ENCODE measurements at regions of chr6 and their contacts with region 1.

Region 1: DNA sequence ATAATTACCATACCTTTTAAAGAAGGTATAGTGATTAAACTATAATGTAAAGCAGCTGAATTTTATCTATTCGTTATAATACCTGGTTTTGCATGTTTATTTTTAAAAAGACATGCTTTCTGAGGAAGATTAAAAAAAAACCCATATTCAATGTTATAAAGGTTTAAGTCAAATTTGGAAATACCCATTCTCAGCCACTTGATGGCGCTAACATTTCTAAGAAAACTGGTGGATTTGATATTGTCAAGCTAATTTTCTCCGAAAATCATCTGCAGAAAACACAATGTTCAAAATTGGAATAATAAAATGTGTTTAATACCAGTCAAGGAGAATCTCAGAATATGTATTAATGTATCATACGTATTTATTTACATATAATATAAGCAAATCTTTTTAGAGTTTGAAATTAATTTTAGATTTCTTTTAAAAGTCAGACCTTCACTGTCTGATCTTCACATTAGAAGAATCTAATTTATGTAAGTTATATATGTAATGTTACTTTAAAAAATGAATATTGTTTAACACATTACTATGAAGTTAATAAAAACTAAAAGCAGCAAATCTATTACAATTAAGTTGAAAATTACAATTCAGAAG is 35.0 kb downstream of the SHPRH start:
- DNase-seq: peak in 4 of 14 experiments; percentile 9 to 56 (median 41)
- ATAC-seq: no peak
- H3K4me3 ChIP-seq: no peak overlapping the region
- H3K4me3 Mint-ChIP-seq: no peak overlapping the region
- H3K27ac ChIP-seq: no peak overlapping the region
- H3K27ac Mint-ChIP-seq: no peak overlapping the region
- H3K4me1 ChIP-seq: no peaks in the 10 kb centered on the region
- H3K4me1 Mint-ChIP-seq: no peaks in the 10 kb centered on the region
- H3K27me3 ChIP-seq: no peaks in the 10 kb centered on the region
- H3K27me3 Mint-ChIP-seq: no peaks in the 10 kb centered on the region
- CTCF ChIP-seq: peak; percentile 62

Region 2: DNA sequence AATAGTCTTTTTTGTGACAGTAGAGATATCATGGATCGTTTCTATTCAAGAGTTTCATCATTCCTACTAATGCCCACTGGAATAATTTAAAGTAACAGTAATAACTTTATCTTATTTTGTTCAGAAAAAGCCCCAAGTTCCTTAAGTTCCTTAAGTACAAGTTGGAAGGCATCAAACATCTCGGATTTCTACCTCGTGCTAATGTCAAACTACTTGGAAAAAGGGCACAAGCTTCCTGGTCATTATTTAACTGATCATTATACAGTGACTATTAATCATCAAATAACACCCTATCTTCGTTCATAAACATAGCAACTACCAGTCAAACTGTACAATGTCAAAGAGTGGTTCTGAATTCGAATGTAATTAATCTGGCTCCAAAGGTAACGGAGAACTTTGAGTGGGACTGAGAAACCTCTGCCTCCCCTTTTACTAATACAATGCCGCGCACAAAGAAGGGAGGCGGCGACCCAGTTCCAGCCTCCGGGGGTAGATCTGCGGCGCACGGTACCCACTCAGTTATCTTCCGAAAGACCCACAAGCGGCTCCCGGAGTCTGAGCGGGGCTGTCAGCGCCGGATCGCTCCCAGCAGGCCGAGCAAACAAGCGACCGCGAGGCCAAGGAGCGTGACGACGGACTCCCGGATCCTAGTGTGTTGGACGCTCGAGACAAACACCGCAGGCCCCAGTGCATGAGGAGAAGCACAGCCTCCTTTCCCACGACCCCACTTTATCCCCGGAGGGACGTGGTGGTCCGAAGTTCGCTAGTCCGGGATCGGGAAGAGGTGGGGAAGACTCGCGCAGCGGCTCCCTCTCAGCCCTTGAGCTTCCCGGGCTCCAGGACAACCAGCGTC is 34.3 kb after region 1 on chr6:
- CTCF ChIA-PET with region 1: interaction called, 14 read pairs
- POLR2A ChIA-PET with region 1: no interaction called
- intact Hi-C with region 1: no loop called
- DNase-seq: peak; percentile 5 to 64 (median 26)
- ATAC-seq: peak; percentile 15
- H3K4me3 ChIP-seq: peak overlapping the region; percentile 76
- H3K4me3 Mint-ChIP-seq: peak overlapping the region; percentile 96
- H3K27ac ChIP-seq: no peak overlapping the region
- H3K27ac Mint-ChIP-seq: peak overlapping the region; percentile 98
- H3K4me1 ChIP-seq: peaks cover 7% of the 10 kb centered on the region
- H3K4me1 Mint-ChIP-seq: peaks cover 58% of the 10 kb centered on the region
- H3K27me3 ChIP-seq: no peaks in the 10 kb centered on the region
- H3K27me3 Mint-ChIP-seq: no peaks in the 10 kb centered on the region
- CTCF ChIP-seq: no peak

Region 3: DNA sequence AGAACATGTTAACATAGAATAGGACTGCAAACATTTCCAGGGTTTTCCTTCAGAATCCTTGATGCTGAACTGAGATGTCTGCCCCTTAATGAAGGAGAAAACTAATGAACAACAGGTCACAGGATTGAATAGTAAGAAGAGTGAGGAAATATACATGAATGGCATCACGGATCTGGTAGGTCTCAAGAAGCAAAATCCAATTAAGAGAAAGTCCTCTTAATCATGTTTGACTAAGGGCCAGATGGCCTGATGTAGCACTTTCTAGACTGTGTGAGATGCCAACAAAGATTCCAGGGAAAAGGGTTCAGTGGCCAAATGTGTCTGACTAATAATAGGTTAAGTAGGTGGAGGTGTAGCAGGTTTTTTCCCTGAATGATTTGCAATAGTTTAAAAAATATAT is 48.7 kb after region 1 on chr6:
- CTCF ChIA-PET with region 1: no interaction called
- POLR2A ChIA-PET with region 1: no interaction called
- intact Hi-C with region 1: no loop called
- DNase-seq: no peak
- ATAC-seq: no peak
- H3K4me3 ChIP-seq: no peak overlapping the region
- H3K4me3 Mint-ChIP-seq: no peak overlapping the region
- H3K27ac ChIP-seq: no peak overlapping the region
- H3K27ac Mint-ChIP-seq: no peak overlapping the region
- H3K4me1 ChIP-seq: no peaks in the 10 kb centered on the region
- H3K4me1 Mint-ChIP-seq: no peaks in the 10 kb centered on the region
- H3K27me3 ChIP-seq: no peaks in the 10 kb centered on the region
- H3K27me3 Mint-ChIP-seq: peaks cover 14% of the 10 kb centered on the region
- CTCF ChIP-seq: no peak

Region 4: GRCh38 chr6:146224988-146225387 is 295.9 kb after region 1 on chr6:
- CTCF ChIA-PET with region 1: no interaction called
- POLR2A ChIA-PET with region 1: no interaction called
- intact Hi-C with region 1: no loop called
- DNase-seq: no peak
- ATAC-seq: no peak
- H3K4me3 ChIP-seq: no peak overlapping the region
- H3K4me3 Mint-ChIP-seq: no peak overlapping the region
- H3K27ac ChIP-seq: no peak overlapping the region
- H3K27ac Mint-ChIP-seq: no peak overlapping the region
- H3K4me1 ChIP-seq: no peaks in the 10 kb centered on the region
- H3K4me1 Mint-ChIP-seq: no peaks in the 10 kb centered on the region
- H3K27me3 ChIP-seq: no peaks in the 10 kb centered on the region
- H3K27me3 Mint-ChIP-seq: peaks cover 10% of the 10 kb centered on the region
- CTCF ChIP-seq: no peak

Region 5: GRCh38 chr6:146700078-146700686 is 771.0 kb after region 1 on chr6:
- CTCF ChIA-PET with region 1: interaction called, 3 read pairs
- POLR2A ChIA-PET with region 1: no interaction called
- intact Hi-C with region 1: loop called (anchors 5 kb)
- DNase-seq: peak in 10 of 14 experiments; percentile 2 to 71 (median 26)
- ATAC-seq: peak; percentile 57
- H3K4me3 ChIP-seq: no peak overlapping the region
- H3K4me3 Mint-ChIP-seq: no peak overlapping the region
- H3K27ac ChIP-seq: no peak overlapping the region
- H3K27ac Mint-ChIP-seq: no peak overlapping the region
- H3K4me1 ChIP-seq: no peaks in the 10 kb centered on the region
- H3K4me1 Mint-ChIP-seq: no peaks in the 10 kb centered on the region
- H3K27me3 ChIP-seq: no peaks in the 10 kb centered on the region
- H3K27me3 Mint-ChIP-seq: no peaks in the 10 kb centered on the region
- CTCF ChIP-seq: peak; percentile 63

Region 6: GRCh38 chr6:146775226-146775625 is 846.1 kb after region 1 on chr6:
- CTCF ChIA-PET with region 1: no interaction called
- POLR2A ChIA-PET with region 1: no interaction called
- intact Hi-C with region 1: loop called (anchors 5 kb)
- DNase-seq: peak in 3 of 14 experiments; percentile 10 to 27 (median 11)
- ATAC-seq: no peak
- H3K4me3 ChIP-seq: no peak overlapping the region
- H3K4me3 Mint-ChIP-seq: no peak overlapping the region
- H3K27ac ChIP-seq: no peak overlapping the region
- H3K27ac Mint-ChIP-seq: no peak overlapping the region
- H3K4me1 ChIP-seq: peaks cover 11% of the 10 kb centered on the region
- H3K4me1 Mint-ChIP-seq: peaks cover 19% of the 10 kb centered on the region
- H3K27me3 ChIP-seq: no peaks in the 10 kb centered on the region
- H3K27me3 Mint-ChIP-seq: no peaks in the 10 kb centered on the region
- CTCF ChIP-seq: peak; percentile 28

Region 7: GRCh38 chr6:146829792-146830565 is 900.8 kb after region 1 on chr6:
- CTCF ChIA-PET with region 1: no interaction called
- POLR2A ChIA-PET with region 1: no interaction called
- intact Hi-C with region 1: no loop called
- DNase-seq: no peak
- ATAC-seq: no peak
- H3K4me3 ChIP-seq: no peak overlapping the region
- H3K4me3 Mint-ChIP-seq: no peak overlapping the region
- H3K27ac ChIP-seq: no peak overlapping the region
- H3K27ac Mint-ChIP-seq: no peak overlapping the region
- H3K4me1 ChIP-seq: no peaks in the 10 kb centered on the region
- H3K4me1 Mint-ChIP-seq: no peaks in the 10 kb centered on the region
- H3K27me3 ChIP-seq: no peaks in the 10 kb centered on the region
- H3K27me3 Mint-ChIP-seq: no peaks in the 10 kb centered on the region
- CTCF ChIP-seq: no peak

Measured in CD4-positive, alpha-beta T cell (primary cell).